ENCODE measurements at regions of chr12 and their contacts with region 1.

Region 1: DNA sequence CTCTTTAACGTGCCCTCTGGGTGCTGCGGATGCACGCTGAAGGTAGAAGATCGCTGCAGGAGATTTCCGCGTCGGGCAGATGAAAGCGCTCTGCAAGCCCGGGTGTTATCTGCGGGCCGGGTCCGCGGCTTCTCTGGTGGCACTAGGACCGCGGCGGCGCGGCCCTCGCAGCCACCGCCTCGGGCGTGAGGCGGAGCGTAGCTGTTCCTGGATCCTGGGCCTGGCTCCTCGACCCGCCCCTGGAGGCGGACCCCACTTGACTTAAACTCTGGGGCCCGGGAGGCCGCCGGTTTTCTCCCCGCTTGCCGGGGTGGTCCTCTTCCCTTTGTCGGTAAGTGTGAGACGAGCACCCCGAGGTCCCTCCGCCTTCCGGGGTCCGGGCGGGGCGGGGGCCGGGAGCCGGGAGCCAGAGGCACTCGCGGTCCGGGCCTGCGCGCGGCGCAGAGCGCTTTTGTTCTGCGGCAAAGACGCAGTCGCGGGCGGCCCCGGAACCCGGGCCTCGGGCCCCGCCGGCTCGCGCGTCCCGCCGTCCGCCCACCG is at the start of gene RESF1:
- DNase-seq: peak; percentile 96
- H3K4me3 Mint-ChIP-seq: peak within 1 kb of the TSS; percentile 93
- H3K27ac Mint-ChIP-seq: peak within 1 kb of the TSS; percentile 99
- H3K4me1 Mint-ChIP-seq: peaks cover 56% of the 10 kb centered on the region
- H3K27me3 Mint-ChIP-seq: no peaks in the 10 kb centered on the region
- total RNA-seq, gene RESF1: 51.1 and 55.5 TPM in 2 replicates

Region 2: DNA sequence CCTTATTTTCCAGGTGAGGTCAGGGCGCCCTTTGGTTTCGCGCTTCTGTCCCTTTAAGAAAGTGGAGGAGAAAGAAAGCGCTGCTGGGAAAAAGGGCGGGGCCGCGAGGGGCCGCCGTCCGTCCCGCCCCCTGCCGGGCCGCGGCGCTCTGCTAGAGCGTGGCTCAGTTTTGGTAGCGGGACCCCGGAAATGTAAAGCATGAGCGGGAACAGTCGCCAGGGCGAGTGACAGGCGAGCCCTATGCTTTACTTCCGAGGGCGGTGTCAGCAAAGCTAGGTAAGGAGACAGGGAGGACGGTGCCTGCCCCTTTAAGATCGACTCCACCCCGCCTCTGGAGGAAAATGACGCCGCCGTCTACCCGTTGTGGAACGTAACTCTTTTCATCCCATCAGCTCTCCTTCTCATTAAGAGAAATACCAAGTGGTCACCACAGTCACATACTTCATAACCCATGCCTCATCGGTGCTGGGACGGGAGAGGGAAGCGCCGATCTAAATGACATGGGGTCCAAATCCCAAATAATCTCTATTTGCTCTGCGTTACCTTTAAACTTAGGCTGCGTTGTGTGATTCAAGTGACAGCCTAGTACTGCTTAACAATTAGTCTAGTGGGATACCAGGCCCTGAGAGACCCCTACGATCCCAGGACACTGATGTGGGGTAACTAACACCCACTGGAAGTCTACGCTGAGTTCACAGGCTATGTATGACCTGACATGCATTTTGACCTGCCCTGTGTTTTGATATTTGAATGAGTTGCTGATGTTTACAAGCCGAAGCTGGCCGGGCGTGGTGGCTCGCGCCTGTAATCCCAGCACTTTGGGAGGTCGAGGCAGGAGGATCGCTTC is 299.9 kb before region 1 on chr12 and contains the start of gene ETFBKMT:
- intact Hi-C with region 1: loop called (anchors 1 kb)
- DNase-seq: peak; percentile 98
- H3K4me3 Mint-ChIP-seq: peak within 1 kb of the TSS; percentile 93
- H3K27ac Mint-ChIP-seq: peak within 1 kb of the TSS; percentile 99
- H3K4me1 Mint-ChIP-seq: peaks cover 15% of the 10 kb centered on the region
- H3K27me3 Mint-ChIP-seq: no peaks in the 10 kb centered on the region
- total RNA-seq, gene ETFBKMT: 0.52 and 0.84 TPM in 2 replicates

Region 3: GRCh38 chr12:31749024-31749704 is 210.1 kb before region 1 on chr12:
- intact Hi-C with region 1: loop called (anchors 1 kb)
- DNase-seq: peak; percentile 89
- H3K4me3 Mint-ChIP-seq: peak overlapping the region; percentile 1
- H3K27ac Mint-ChIP-seq: peak overlapping the region; percentile 38
- H3K4me1 Mint-ChIP-seq: peaks cover 43% of the 10 kb centered on the region
- H3K27me3 Mint-ChIP-seq: no peaks in the 10 kb centered on the region

Region 4: GRCh38 chr12:31773867-31774266 is 185.4 kb before region 1 on chr12:
- intact Hi-C with region 1: no loop called
- DNase-seq: no peak
- H3K4me3 Mint-ChIP-seq: no peak overlapping the region
- H3K27ac Mint-ChIP-seq: no peak overlapping the region
- H3K4me1 Mint-ChIP-seq: no peaks in the 10 kb centered on the region
- H3K27me3 Mint-ChIP-seq: no peaks in the 10 kb centered on the region

Region 5: DNA sequence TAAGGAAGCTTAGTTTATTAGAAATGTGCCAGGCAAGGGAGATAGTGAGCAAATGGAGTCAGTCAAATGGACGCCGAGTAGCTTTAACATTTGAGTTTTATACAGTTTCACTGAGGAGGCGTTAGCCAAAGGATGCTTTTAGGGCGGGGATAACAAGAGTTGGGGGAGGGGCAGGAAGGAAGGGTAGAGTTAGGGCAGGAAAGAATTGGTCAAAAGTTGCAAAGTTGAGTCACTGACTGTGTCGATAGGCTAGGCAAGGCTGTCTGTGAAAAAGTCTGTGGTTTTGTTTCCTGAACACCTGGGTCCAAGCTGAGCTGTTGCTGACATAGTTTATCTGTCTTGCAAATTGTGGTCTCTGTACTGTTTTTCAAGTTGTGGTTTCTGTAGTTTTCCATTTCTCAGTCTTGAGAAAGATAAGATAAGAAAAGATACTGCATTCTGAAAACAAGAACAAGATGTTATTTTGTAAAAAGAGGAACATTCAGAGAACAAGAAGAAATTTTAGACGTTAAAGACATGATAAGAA is 62.7 kb before region 1 on chr12:
- intact Hi-C with region 1: loop called (anchors 1 kb)
- DNase-seq: peak; percentile 96
- H3K4me3 Mint-ChIP-seq: peak overlapping the region; percentile 69
- H3K27ac Mint-ChIP-seq: peak overlapping the region; percentile 96
- H3K4me1 Mint-ChIP-seq: peaks cover 37% of the 10 kb centered on the region
- H3K27me3 Mint-ChIP-seq: no peaks in the 10 kb centered on the region

Region 6: DNA sequence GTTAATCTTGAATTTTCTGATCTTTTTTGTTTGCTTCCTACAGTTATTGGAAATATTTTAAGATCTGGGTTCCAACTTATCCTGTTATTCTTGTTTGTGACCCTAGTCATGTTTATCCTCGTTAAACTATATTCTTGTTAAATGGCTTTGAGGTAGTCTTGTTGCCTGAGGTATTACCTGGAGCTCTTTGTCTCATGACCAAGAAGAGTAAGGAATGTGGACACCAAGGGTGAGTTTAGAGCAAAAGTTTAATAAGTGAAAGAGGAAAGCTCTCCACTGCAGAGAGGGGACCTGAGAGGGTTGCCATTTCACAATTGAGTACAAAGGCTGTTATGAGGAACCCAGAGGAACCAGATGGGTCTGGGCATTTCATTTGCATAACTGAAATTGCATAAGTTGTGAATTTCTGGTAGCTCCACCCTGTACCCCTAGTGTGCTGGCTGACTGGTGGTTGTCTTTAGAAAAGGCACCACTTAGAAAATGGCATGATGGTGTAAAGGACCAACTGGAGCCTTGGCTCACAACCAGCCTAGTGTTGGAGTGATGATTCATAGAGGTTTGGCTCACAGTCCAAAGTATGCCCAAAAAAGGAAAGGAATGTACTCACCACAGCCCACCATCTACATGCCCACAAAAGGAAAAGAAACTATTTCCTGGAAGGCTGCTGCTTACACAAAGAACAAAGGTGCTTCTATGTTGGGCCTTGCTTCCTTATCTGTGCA is 36.7 kb before region 1 on chr12:
- intact Hi-C with region 1: no loop called
- DNase-seq: no peak
- H3K4me3 Mint-ChIP-seq: no peak overlapping the region
- H3K27ac Mint-ChIP-seq: no peak overlapping the region
- H3K4me1 Mint-ChIP-seq: peaks cover 1% of the 10 kb centered on the region
- H3K27me3 Mint-ChIP-seq: no peaks in the 10 kb centered on the region

Region 7: GRCh38 chr12:32025906-32026305 is 66.7 kb after region 1 on chr12:
- intact Hi-C with region 1: loop called (anchors 2 kb)
- DNase-seq: peak; percentile 88
- H3K4me3 Mint-ChIP-seq: peak overlapping the region; percentile 23
- H3K27ac Mint-ChIP-seq: peak overlapping the region; percentile 52
- H3K4me1 Mint-ChIP-seq: peaks cover 28% of the 10 kb centered on the region
- H3K27me3 Mint-ChIP-seq: no peaks in the 10 kb centered on the region

Region 8: GRCh38 chr12:32139064-32139421 is 179.8 kb after region 1 on chr12:
- intact Hi-C with region 1: loop called (anchors 10 kb)
- DNase-seq: peak; percentile 79
- H3K4me3 Mint-ChIP-seq: peak overlapping the region; percentile 70
- H3K27ac Mint-ChIP-seq: peak overlapping the region; percentile 1
- H3K4me1 Mint-ChIP-seq: peaks cover 18% of the 10 kb centered on the region
- H3K27me3 Mint-ChIP-seq: peaks cover 14% of the 10 kb centered on the region

Region 9: GRCh38 chr12:32226768-32227167 is 267.5 kb after region 1 on chr12:
- intact Hi-C with region 1: no loop called
- DNase-seq: no peak
- H3K4me3 Mint-ChIP-seq: no peak overlapping the region
- H3K27ac Mint-ChIP-seq: no peak overlapping the region
- H3K4me1 Mint-ChIP-seq: no peaks in the 10 kb centered on the region
- H3K27me3 Mint-ChIP-seq: no peaks in the 10 kb centered on the region

Measured in activated CD4-positive, alpha-beta T cell treated with anti-CD3 and anti-CD28 coated beads, Interleukin-2, amount 10 ng/mL, durations not matched to agents 24 days and 14 days (primary cell).